ENCODE measurements at regions of chr10 and their contacts with region 1.

Region 1: DNA sequence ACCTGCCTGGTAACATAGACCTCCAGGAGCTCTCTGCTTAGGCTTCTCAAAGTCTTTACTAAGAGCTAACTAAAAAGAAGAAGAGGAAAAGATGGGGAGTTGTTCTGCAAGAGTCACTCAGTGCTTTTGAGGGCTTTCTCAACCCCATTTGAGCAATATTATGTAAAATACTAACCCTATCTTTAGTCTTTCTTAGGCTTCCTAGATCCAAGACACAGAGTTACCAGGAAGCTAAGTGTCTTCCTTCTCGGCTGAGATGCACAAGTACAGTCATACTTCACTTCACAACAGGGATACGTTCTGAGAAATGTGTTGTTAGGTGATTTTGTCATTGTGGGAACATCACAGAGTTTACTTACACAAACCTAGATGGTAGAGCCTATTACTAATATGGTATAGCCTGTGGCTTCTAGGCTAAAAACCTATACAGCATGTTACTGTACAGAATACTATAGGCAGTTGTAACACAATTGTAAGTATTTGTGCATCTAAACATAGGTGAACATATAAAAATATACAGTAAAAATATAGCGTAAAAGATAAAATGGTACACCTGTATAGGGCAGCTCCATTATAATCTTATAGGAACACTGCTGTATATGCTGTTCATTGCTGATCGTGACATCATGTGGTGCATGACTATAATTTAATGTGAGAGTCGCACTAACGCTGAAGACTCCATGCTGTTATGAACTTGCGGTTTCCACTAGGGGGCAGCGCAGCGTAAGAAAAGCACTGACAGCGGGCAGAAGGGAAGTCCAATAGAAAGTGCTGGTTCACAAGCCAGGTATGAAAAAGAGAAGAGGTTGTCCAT is 16.3 kb downstream of the ANKRD22 start:
- DNase-seq: peak; percentile 83
- ATAC-seq: peak; percentile 96
- H3K4me3 ChIP-seq: no peak overlapping the region
- H3K27ac ChIP-seq: no peak overlapping the region
- H3K4me1 ChIP-seq: no peaks in the 10 kb centered on the region
- H3K27me3 ChIP-seq: no peaks in the 10 kb centered on the region
- CTCF ChIP-seq: peak; percentile 88

Region 2: DNA sequence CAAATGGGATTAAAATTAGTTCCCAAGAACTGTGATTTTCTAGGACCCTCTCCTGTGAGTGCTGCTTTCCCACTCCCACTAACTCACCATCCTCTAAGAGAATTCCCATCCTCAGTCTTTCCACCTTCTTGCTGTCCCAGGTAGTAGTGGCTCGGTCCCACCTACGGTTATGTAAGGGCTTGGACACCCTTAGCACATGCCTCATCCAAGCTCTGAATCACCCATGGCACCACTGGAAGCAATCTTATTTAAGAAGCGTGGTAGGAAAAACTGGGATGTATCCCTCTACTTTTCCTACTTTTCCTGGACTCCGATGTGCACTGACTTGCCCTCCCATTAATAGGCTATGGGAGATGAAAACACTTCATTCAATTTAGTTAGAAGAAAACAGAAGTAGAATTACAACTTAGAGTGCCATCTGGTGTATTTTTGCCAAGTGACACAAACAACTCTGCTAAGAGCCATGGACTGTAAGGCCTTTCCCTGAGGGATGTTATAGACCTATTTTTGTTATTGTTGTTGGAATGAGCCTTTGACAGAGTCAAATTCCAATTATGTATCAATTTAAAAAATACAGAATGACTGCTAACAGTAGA is 30.1 kb after region 1 on chr10:
- CTCF ChIA-PET with region 1: interaction called, 4 read pairs
- POLR2A ChIA-PET with region 1: no interaction called
- intact Hi-C with region 1: loop called (anchors 1 kb)
- DNase-seq: peak; percentile 56
- ATAC-seq: peak; percentile 51; the same call in 1 of the 2 replicates
- H3K4me3 ChIP-seq: no peak overlapping the region
- H3K27ac ChIP-seq: no peak overlapping the region
- H3K4me1 ChIP-seq: peaks cover 12% of the 10 kb centered on the region
- H3K27me3 ChIP-seq: no peaks in the 10 kb centered on the region
- CTCF ChIP-seq: peak; percentile 56

Region 3: GRCh38 chr10:88880282-88881076 is 45.2 kb after region 1 on chr10:
- CTCF ChIA-PET with region 1: interaction called, 3 read pairs
- POLR2A ChIA-PET with region 1: no interaction called
- intact Hi-C with region 1: loop called (anchors 5 kb)
- DNase-seq: peak; percentile 79
- ATAC-seq: peak; percentile 75
- H3K4me3 ChIP-seq: peak overlapping the region; percentile 87
- H3K27ac ChIP-seq: peak overlapping the region; percentile 57
- H3K4me1 ChIP-seq: peaks cover 37% of the 10 kb centered on the region
- H3K27me3 ChIP-seq: no peaks in the 10 kb centered on the region
- CTCF ChIP-seq: no peak

Region 4: DNA sequence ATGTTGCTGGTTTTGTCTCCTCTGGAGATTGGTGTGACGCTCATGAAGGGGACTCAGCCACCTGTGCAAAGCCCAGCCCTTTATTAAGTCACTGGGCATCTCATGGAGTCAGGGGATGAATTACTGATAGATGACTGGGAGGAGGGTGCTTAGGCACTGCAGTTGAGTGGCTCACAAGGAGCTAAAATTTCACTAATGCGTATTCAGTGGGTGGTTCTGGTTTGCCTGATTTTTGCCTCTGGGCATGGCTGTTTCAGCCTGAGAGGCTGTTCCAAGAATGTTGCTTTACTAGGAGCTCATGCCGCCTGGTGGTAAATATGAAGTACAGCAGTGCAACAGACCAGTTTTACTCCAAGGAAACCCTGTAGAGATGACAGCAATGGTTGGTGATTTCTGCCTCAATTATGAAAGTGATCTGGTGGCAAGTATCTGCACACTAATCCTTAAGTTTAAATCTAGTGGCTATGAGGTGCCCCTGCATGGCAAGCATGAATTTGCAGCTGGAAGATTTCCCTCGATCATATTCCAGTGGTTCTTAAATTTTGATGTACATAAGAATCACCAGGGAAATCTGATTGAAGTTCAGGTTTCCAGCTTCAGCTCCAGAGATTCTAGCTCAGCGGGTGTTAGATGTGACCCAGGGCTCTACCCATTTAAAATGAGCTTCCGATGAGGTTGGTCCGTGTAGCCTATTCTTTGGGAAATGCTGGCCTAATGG is 97.4 kb after region 1 on chr10:
- CTCF ChIA-PET with region 1: interaction called, 16 read pairs
- POLR2A ChIA-PET with region 1: no interaction called
- intact Hi-C with region 1: loop called (anchors 1 kb)
- DNase-seq: peak; percentile 86
- ATAC-seq: peak; percentile 76
- H3K4me3 ChIP-seq: no peak overlapping the region
- H3K27ac ChIP-seq: peak overlapping the region; percentile 15; the same call in 1 of the 2 replicates
- H3K4me1 ChIP-seq: peaks cover 13% of the 10 kb centered on the region
- H3K27me3 ChIP-seq: no peaks in the 10 kb centered on the region
- CTCF ChIP-seq: peak; percentile 81

Region 5: GRCh38 chr10:88944813-88945212 is 109.5 kb after region 1 on chr10:
- CTCF ChIA-PET with region 1: no interaction called
- POLR2A ChIA-PET with region 1: no interaction called
- intact Hi-C with region 1: no loop called
- DNase-seq: no peak
- ATAC-seq: no peak
- H3K4me3 ChIP-seq: no peak overlapping the region
- H3K27ac ChIP-seq: no peak overlapping the region
- H3K4me1 ChIP-seq: no peaks in the 10 kb centered on the region
- H3K27me3 ChIP-seq: no peaks in the 10 kb centered on the region
- CTCF ChIP-seq: no peak

Region 6: DNA sequence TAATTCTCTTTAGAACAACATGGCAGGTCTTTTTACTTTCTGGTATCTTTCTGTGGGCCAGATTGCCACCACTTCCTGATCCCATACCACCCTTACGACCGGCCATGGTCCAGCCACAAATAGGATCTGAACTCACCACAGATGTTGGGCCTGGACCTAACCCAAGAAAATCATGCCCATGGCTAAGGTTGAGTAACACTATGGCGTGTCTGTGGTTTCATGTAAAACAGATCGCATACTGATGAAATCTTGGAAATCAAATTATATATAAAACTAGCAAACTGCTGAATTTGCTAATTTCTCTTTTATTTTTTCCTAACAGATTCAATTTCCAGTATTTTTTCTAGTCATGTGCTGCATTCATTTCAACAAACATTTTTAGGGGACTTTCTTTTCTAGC is 294.6 kb after region 1 on chr10:
- CTCF ChIA-PET with region 1: no interaction called
- POLR2A ChIA-PET with region 1: no interaction called
- intact Hi-C with region 1: no loop called
- DNase-seq: peak; percentile 79
- ATAC-seq: peak; percentile 43; the same call in 1 of the 2 replicates
- H3K4me3 ChIP-seq: no peak overlapping the region
- H3K27ac ChIP-seq: no peak overlapping the region
- H3K4me1 ChIP-seq: peaks cover 27% of the 10 kb centered on the region
- H3K27me3 ChIP-seq: no peaks in the 10 kb centered on the region
- CTCF ChIP-seq: no peak

Measured in PC-3 (cell line).